Dorsolateral prefrontal cortex (tissue), 120 donors: ENCODE measurements at regions of chr1 and their contacts with region 1.

Region 1: GRCh38 chr1:15384301-15384901 is 25.3 kb upstream of the EFHD2 start:
- DNase-seq: peak; percentile 38 to 79 (median 60)
- H3K4me3 ChIP-seq: peak overlapping the region in 58 of 59 donors; percentile 0 to 67 (median 38)
- H3K27ac ChIP-seq: peak overlapping the region in 49 of 59 donors; percentile 14 to 80 (median 63)
- H3K27me3 ChIP-seq: peaks cover 0 to 2% (median 0%) of the 10 kb centered on the region in 45 donors
- CTCF ChIP-seq: peak in 37 of 56 donors; percentile 8 to 61 (median 30)

Region 2: DNA sequence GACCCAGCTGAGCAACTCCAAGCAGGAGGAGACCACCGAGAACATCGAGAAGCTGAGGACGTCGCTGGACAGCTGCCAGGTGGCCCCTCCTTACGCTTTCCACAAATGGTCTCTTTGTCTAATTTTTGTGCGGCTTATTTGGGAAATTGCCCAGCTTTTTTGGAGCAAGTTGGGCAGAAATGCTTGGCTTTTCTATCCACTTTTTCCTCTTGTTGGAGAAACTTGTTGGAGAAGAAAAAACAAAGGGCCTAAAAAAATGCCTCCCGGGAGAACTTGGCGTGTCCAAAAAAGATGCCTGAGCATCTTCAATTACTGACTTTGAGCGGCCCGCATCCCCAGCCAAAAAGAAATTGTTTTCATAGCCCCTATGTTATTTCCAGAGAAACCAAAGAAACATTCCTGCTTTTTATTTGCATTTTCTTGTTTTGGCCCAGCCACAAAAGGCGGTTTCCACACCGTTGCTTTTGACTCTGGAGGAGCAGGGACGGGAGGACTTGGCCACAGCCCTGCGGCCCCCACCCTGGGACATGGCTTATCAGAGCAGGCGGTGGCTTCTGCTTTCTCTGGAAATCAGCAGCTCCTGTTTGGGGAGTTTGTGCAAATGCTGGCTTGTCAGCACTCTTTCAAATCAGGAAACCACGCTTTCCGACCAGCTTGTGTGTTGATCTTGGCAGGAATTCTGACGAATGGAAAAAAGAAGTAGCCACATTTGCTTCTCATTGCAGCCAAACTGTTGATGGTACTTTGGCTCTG is 55.9 kb before region 1 on chr1:
- intact Hi-C with region 1: loop called in 1 of 2 experiments (anchors 5 kb)
- DNase-seq: peak in 9 of 10 donors; percentile 41 to 72 (median 55)
- H3K4me3 ChIP-seq: peak overlapping the region in 24 of 59 donors; percentile 0 to 54 (median 16)
- H3K27ac ChIP-seq: peak overlapping the region in 44 of 59 donors; percentile 6 to 84 (median 56)
- H3K27me3 ChIP-seq: no peaks in the 10 kb centered on the region
- CTCF ChIP-seq: no peak

Region 3: GRCh38 chr1:15417365-15417934 is 33.0 kb after region 1 on chr1:
- intact Hi-C with region 1: loop called in 1 of 2 experiments (anchors 5 kb)
- DNase-seq: no peak
- H3K4me3 ChIP-seq: no peak overlapping the region
- H3K27ac ChIP-seq: peak overlapping the region in 22 of 59 donors; percentile 5 to 78 (median 43)
- H3K27me3 ChIP-seq: no peaks in the 10 kb centered on the region
- CTCF ChIP-seq: no peak